Upper lobe of right lung (tissue), 1 donor: ENCODE measurements at regions of chr18 and their contacts with region 1.

Region 1: DNA sequence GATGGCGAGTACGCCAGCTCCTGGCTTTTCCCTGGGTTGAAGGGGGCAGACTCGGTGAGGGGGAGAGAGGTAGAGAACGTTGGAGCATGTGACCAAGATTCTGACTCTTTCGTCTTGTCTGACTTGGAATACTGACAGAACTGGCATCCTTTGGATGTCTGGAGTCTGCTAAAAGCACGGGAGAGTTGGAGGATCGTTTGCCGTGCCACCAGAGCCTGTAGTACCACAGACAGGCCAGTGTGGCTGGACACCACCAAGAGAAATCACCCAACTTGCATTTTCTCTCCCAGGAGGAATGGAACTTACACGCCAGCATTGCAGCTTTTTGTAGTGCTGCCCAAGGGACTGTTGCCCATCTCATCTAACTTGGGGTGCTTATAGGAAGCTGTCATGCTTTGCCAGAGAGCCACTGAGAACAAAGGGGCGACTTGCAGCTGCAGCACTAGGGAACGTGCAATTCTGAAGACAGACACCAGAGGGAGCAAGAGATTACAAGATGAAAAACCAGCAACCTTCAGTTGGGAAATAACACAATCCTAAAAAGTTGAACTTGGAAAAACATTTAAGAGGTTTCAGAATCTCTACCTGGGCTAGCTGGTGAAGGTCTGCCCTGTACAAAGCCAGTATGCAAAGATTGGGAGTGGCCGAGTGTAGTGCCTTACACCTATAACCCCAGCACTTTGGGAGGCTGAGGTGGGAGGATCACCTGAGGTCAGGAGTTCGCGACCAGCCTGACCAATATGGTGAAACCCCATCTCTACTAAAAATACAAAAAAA is 24.1 kb downstream of the PSMG2 start:
- DNase-seq: no peak
- ATAC-seq: peak; percentile 88
- H3K4me3 ChIP-seq: no peak overlapping the region
- H3K27ac ChIP-seq: no peak overlapping the region
- H3K4me1 ChIP-seq: no peaks in the 10 kb centered on the region
- H3K27me3 ChIP-seq: no peaks in the 10 kb centered on the region
- CTCF ChIP-seq: peak; percentile 93

Region 2: DNA sequence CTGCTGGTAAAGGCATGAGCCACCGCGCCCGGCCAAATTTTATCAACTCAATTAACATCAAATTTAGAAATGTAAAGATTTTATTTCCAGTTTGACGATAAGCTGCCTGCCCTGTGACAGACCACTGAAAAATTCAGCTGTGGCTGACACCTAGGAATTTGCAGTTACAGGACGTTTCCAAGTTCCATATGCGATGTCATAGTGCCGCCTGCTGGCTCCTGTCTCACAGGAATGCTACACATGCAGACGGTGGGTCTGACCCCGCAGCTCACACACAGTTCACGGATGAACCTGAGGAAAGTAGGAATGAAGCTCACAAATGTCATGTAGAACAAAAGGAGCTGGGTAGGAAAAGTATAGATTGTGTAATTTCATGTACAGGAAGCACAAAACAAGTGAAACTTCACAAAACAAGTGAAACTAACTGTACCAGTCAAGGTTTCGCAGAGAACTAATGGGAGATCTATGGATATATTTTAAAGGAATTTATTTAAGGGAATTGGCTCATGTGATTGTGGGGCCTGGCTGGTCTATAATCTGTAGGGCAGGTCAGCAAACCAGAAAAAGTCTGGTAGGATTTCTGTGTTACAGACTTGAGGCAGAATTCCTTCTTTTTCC is 207.6 kb after region 1 on chr18:
- intact Hi-C with region 1: loop called (anchors 2 kb)
- DNase-seq: peak; percentile 85
- ATAC-seq: peak; percentile 97
- H3K4me3 ChIP-seq: no peak overlapping the region
- H3K27ac ChIP-seq: no peak overlapping the region
- H3K4me1 ChIP-seq: no peaks in the 10 kb centered on the region
- H3K27me3 ChIP-seq: no peaks in the 10 kb centered on the region
- CTCF ChIP-seq: peak; percentile 93